ENCODE measurements at regions of chr6 and their contacts with region 1.

Region 1: GRCh38 chr6:55239099-55239498 is 64.8 kb downstream of the HCRTR2 start:
- DNase-seq: no peak

Region 2: GRCh38 chr6:53979468-53980067 is 1259.5 kb before region 1 on chr6:
- intact Hi-C with region 1: loop called (anchors 10 kb)
- DNase-seq: no peak

Region 3: GRCh38 chr6:55100686-55101085 is 138.4 kb before region 1 on chr6:
- intact Hi-C with region 1: no loop called
- DNase-seq: no peak

Measured in cardiac septum (tissue), 1 donor.